ENCODE measurements at regions of chr7 and their contacts with region 1.

Region 1: DNA sequence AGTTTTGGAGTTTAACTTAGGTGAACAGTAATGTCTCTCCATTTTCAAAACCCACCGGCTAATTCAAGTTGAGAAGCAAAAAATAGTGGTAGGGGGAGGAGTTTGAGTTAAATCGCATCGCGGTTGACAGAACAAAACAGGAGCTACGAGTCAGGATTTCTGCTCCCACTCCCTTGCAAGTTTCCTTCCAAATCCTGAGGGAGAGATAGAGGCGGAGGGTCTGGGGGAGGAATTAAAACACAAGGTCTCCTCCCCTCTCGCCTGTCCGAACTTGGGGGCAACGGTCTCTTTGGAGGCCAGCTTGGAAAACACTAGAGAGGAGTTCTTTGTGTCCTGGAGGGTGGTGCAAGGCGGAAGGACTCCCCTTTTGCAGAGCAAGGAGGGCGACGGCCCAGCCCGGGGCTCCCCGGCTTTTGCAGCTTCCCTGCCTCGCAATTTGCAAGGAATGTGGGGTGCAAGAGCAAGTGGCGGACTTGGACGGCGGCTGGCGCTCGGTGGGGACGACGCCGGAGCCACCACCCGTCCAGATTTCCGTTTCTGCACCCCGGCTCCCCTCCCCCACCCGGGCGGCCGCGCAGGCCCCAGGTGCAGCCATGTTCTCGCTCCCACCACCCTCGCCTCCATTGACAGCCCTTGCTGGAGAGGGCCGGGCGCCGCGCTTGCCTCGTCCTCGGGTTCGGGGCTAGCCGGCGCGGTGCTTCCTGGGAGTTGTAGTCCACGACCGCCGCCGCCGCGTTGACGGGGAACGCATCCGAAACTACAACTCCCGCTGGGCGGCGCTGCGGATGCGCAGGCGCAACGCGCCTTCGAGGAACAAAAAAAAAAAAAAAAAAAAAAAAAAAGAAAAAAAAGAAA is 454 bp upstream of the GTF2I start:
- DNase-seq: peak; percentile 98 to 99
- H3K4me3 ChIP-seq: peak overlapping the region; percentile 90
- H3K4me3 Mint-ChIP-seq: peak overlapping the region; percentile 80
- H3K27ac Mint-ChIP-seq: peak overlapping the region; percentile 82
- H3K4me1 ChIP-seq: peaks cover 29% of the 10 kb centered on the region
- H3K4me1 Mint-ChIP-seq: peaks cover 23% of the 10 kb centered on the region
- H3K27me3 ChIP-seq: no peaks in the 10 kb centered on the region
- H3K27me3 Mint-ChIP-seq: no peaks in the 10 kb centered on the region
- CTCF ChIP-seq: peak in 1 of 2 experiments; percentile 14

Region 2: GRCh38 chr7:74417419-74417971 is 239.6 kb before region 1 on chr7:
- CTCF ChIA-PET with region 1: no interaction called
- POLR2A ChIA-PET with region 1: no interaction called
- intact Hi-C with region 1: loop called (anchors 10 kb)
- DNase-seq: peak; percentile 73 to 84
- H3K4me3 ChIP-seq: no peak overlapping the region
- H3K4me3 Mint-ChIP-seq: no peak overlapping the region
- H3K27ac Mint-ChIP-seq: no peak overlapping the region
- H3K4me1 ChIP-seq: no peaks in the 10 kb centered on the region
- H3K4me1 Mint-ChIP-seq: peaks cover 9% of the 10 kb centered on the region
- H3K27me3 ChIP-seq: no peaks in the 10 kb centered on the region
- H3K27me3 Mint-ChIP-seq: no peaks in the 10 kb centered on the region
- CTCF ChIP-seq: peak; percentile 93 to 95

Region 3: GRCh38 chr7:74579800-74580685 is 77.0 kb before region 1 on chr7:
- CTCF ChIA-PET with region 1: interaction called, 18 read pairs
- POLR2A ChIA-PET with region 1: interaction called, 9 read pairs
- intact Hi-C with region 1: loop called (anchors 1 kb)
- DNase-seq: peak; percentile 93 to 94
- H3K4me3 ChIP-seq: peak overlapping the region; percentile 11
- H3K4me3 Mint-ChIP-seq: peak overlapping the region; percentile 76
- H3K27ac Mint-ChIP-seq: peak overlapping the region; percentile 99
- H3K4me1 ChIP-seq: peaks cover 54% of the 10 kb centered on the region
- H3K4me1 Mint-ChIP-seq: peaks cover 26% of the 10 kb centered on the region
- H3K27me3 ChIP-seq: no peaks in the 10 kb centered on the region
- H3K27me3 Mint-ChIP-seq: no peaks in the 10 kb centered on the region
- CTCF ChIP-seq: no peak

Region 4: DNA sequence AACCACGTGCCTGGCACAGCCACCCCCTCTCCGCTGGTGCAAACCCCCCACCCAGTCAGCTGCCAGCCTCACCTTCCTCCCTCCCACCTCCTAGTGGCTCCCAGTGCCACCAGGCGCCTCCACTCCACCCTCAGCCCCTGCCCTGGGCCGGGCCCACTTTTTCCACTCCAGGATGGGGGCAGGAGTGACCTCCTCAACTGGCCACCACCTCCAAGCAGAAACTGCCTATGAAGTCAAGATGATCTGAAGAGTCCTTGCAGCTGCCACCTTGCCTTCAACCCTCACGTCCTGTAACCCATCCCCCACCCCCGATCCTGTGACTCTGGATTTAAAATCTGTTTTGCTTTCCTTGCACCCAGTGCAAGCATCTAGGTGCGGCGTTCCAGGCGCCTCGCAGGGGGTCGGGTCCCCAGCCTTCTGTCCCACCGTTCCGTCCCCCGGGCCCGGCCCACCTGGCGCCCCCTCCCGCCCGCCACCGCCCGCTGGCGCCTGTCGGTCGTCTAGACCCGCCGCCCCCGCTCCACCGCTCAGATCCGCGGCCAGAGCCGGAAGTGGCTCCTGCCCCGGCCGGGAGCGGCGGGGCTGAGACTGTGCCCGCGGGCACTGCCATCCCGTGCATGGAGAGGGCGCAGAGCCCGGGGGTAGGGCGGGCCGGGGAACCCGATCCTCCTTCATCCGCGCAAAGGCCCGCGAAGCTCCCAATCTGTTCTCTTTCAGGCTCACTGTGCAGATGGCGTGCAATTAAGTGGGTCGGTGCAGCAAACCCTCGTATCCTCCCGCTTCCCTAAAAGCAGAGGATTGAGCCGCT is 50.8 kb before region 1 on chr7:
- CTCF ChIA-PET with region 1: interaction called, 8 read pairs
- POLR2A ChIA-PET with region 1: interaction called, 9 read pairs
- intact Hi-C with region 1: loop called (anchors 1 kb)
- DNase-seq: no peak
- H3K4me3 ChIP-seq: no peak overlapping the region
- H3K4me3 Mint-ChIP-seq: no peak overlapping the region
- H3K27ac Mint-ChIP-seq: no peak overlapping the region
- H3K4me1 ChIP-seq: peaks cover 15% of the 10 kb centered on the region
- H3K4me1 Mint-ChIP-seq: peaks cover 15% of the 10 kb centered on the region
- H3K27me3 ChIP-seq: no peaks in the 10 kb centered on the region
- H3K27me3 Mint-ChIP-seq: no peaks in the 10 kb centered on the region
- CTCF ChIP-seq: no peak

Region 5: DNA sequence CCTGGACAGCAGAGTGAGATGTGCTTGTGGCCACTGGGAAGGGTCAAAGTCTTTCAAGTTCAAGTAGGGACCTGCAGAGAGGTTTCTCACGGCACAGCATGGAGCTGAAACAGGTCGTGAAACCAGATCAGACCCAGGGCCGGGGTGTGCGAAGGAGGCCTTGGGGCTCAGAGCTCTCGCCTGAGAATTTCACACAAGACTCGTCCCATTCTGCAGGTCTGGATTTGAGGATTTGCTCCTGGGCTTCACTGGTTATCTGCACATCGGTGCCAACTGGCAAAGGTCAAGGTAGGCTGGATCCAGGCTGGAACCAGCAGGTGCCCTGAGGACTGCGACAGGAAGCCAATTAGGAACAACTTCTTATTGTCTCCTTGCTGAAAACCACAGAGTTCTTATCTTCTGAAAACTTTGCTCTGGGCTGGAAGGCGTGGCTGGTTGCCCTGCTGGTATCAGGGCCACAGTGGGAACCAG is 23.6 kb before region 1 on chr7:
- CTCF ChIA-PET with region 1: no interaction called
- POLR2A ChIA-PET with region 1: interaction called, 10 read pairs
- intact Hi-C with region 1: loop called (anchors 2 kb)
- DNase-seq: no peak
- H3K4me3 ChIP-seq: no peak overlapping the region
- H3K4me3 Mint-ChIP-seq: no peak overlapping the region
- H3K27ac Mint-ChIP-seq: no peak overlapping the region
- H3K4me1 ChIP-seq: peaks cover 20% of the 10 kb centered on the region
- H3K4me1 Mint-ChIP-seq: peaks cover 7% of the 10 kb centered on the region
- H3K27me3 ChIP-seq: no peaks in the 10 kb centered on the region
- H3K27me3 Mint-ChIP-seq: no peaks in the 10 kb centered on the region
- CTCF ChIP-seq: no peak

Region 6: GRCh38 chr7:74690474-74690873 is 33.4 kb after region 1 on chr7:
- CTCF ChIA-PET with region 1: no interaction called
- POLR2A ChIA-PET with region 1: no interaction called
- intact Hi-C with region 1: loop called (anchors 5 kb)
- DNase-seq: no peak
- H3K4me3 ChIP-seq: no peak overlapping the region
- H3K4me3 Mint-ChIP-seq: no peak overlapping the region
- H3K27ac Mint-ChIP-seq: no peak overlapping the region
- H3K4me1 ChIP-seq: no peaks in the 10 kb centered on the region
- H3K4me1 Mint-ChIP-seq: no peaks in the 10 kb centered on the region
- H3K27me3 ChIP-seq: no peaks in the 10 kb centered on the region
- H3K27me3 Mint-ChIP-seq: no peaks in the 10 kb centered on the region
- CTCF ChIP-seq: no peak